Activated CD4-positive, alpha-beta T cell treated with anti-CD3 and anti-CD28 coated beads, Interleukin-2, amount 10 ng/mL, durations not matched to agents 24 days and 14 days (primary cell): ENCODE measurements at regions of chr2 and their contacts with region 1.

Region 1: DNA sequence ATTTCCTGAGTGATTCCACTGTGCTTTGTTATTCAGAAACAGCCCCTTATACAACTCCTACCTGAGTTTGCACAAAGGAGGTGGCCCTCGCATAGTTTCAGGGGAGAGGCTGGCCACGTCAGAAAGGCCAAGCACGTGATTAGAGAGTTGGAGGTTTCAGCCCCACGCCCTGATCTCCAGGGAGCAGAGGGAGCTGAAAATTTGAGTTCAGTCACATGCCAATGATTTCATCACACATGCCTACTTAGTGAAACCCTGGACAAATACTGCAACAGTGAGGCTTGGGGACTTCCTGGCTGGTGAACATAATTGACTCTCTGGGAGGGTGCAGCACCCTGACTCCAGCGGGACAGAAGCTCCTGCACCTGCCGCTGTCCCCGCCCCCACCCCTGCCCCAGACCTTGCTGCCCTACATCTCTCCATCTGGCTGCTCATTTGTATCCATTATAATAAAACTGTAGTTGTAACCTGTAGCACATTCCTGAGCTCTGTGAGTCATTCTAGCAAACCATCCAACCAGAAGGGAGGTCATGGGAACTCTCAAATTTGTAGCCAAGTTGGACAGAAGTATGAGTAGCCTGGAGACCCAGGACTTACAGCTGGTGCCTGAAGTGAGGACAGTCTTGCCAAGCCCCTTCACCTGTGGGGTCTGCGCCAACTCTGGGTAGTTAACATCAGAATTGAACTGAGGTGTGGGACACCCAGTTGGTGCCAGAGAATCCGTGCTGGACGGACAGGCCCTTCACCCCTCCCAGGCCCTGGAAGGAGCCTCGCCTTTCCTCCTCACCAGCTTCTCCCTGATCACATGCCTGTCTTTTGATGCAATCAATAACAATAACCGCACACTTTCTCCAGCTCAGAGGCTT is 224.3 kb downstream of the ANAPC1 start:
- DNase-seq: no peak
- H3K4me3 Mint-ChIP-seq: no peak overlapping the region
- H3K27ac Mint-ChIP-seq: no peak overlapping the region
- H3K4me1 Mint-ChIP-seq: peaks cover 24% of the 10 kb centered on the region
- H3K27me3 Mint-ChIP-seq: peaks cover 32% of the 10 kb centered on the region

Region 2: DNA sequence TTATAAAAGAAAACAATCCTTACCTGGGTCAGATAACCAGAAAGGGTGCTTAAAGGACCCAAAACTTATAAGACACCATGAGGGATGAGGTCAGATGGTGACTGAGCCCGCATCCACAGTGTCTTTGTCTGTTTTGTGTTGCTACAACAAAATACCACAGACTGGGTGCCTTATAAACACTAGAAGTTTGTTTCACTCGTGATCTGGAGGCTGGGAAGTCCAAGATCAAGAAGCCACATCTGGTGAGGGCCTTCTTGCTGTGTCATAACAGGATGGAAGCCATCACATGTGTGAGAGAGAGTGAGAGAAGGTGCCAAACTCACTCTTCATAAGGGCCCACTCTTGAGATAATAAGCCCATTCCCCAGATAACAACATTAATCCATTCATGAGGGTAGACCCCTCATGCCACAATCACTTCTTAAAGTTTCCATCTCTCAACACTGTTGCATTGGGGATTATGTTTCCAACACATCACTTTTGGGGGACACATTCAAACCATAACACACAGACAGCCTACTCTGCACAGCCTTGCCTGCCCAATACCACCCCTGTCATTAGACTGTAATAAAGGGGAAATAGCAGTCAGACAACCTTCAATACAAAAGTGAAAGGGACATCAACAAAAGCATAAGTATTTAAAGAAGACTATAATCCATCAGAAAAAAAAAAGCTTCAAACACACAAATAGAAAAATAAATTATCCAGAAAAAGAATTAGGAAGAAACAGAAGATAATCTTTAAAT is 25.4 kb before region 1 on chr2:
- intact Hi-C with region 1: loop called (anchors 2 kb)
- DNase-seq: peak; percentile 80
- H3K4me3 Mint-ChIP-seq: peak overlapping the region; percentile 62
- H3K27ac Mint-ChIP-seq: peak overlapping the region; percentile 88
- H3K4me1 Mint-ChIP-seq: peaks cover 27% of the 10 kb centered on the region
- H3K27me3 Mint-ChIP-seq: peaks cover 11% of the 10 kb centered on the region

Region 3: DNA sequence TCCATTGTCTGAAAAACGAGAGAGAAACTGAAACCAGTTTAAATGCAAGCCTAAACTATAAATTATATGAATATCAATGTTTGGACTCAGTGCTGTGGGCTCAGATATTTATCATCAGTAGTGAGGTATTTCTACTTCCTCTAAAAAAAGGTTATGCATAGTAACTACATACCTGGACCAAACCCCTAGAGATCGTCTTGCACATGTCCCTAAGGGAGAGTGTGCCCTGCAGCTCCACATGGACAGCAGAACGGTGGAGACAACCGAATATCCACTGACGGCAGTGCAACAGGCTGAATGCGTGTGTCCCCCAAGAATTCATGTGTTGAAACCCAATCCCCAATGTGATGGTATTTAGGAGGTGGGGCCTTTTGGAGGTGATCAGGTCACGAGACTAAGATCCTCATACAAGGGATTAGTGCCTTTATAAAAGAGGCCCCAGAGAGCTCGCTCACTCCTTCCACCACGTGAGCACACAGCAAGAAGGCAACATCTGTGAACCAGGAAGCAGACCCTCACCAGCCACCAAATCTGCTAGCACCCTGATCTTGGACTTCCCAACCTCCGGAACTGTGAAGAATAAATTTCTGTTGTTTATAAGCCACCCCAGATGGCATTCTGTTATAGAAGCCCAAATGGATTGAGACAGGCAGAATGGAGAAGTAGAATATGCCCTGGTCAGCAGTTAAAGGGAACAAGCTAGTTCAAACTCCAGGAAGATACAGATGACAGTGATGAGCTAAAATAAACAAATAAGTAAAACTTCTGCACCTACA is 16.0 kb after region 1 on chr2:
- intact Hi-C with region 1: loop called (anchors 2 kb)
- DNase-seq: no peak
- H3K4me3 Mint-ChIP-seq: no peak overlapping the region
- H3K27ac Mint-ChIP-seq: no peak overlapping the region
- H3K4me1 Mint-ChIP-seq: peaks cover 18% of the 10 kb centered on the region
- H3K27me3 Mint-ChIP-seq: peaks cover 12% of the 10 kb centered on the region

Region 4: GRCh38 chr2:111705711-111706336 is 46.2 kb after region 1 on chr2:
- intact Hi-C with region 1: loop called (anchors 5 kb)
- DNase-seq: peak; percentile 87
- H3K4me3 Mint-ChIP-seq: peak overlapping the region; percentile 61
- H3K27ac Mint-ChIP-seq: peak overlapping the region; percentile 91
- H3K4me1 Mint-ChIP-seq: peaks cover 61% of the 10 kb centered on the region
- H3K27me3 Mint-ChIP-seq: no peaks in the 10 kb centered on the region

Region 5: GRCh38 chr2:111883661-111884591 is 224.3 kb after region 1 on chr2 and contains the start of gene ANAPC1:
- intact Hi-C with region 1: no loop called
- DNase-seq: peak; percentile 96
- H3K4me3 Mint-ChIP-seq: peak within 1 kb of the TSS; percentile 93
- H3K27ac Mint-ChIP-seq: peak within 1 kb of the TSS; percentile 93
- H3K4me1 Mint-ChIP-seq: peaks cover 12% of the 10 kb centered on the region
- H3K27me3 Mint-ChIP-seq: no peaks in the 10 kb centered on the region
- total RNA-seq, gene ANAPC1: 129 and 133 TPM in 2 replicates

Region 6: DNA sequence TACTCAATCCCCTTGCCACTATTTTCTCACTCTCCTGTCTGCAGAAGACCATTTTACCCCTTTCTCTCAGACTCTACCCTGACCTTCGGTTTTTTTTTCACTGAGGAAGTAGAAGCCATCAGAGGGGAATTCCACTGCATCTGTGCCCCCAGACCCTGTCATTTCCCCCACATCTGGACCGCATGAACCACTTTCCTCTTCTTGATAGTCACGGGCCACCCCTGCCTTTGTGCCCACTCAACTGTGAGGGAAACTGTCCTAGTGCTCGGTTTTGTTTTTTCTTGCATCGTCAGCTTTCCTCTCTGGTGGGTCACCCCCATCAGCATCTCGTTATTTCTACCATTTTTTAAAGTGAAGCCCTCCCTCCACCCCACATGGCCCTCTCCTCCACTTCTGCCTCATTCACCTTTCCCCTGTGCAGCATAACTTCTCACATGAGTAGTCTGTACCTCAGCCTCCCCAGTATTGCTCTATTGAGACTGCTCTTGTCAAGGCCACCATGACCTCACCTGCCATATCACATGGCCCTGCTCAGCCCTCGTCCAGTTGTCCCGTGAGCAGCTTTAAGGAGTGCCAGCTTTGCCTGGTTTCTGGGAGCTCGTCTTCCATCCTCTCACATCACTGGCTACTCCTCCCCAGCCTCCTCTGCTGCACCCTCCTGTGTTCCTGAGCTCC is 427.8 kb after region 1 on chr2:
- intact Hi-C with region 1: no loop called
- DNase-seq: no peak
- H3K4me3 Mint-ChIP-seq: no peak overlapping the region
- H3K27ac Mint-ChIP-seq: no peak overlapping the region
- H3K4me1 Mint-ChIP-seq: peaks cover 10% of the 10 kb centered on the region
- H3K27me3 Mint-ChIP-seq: no peaks in the 10 kb centered on the region

Region 7: DNA sequence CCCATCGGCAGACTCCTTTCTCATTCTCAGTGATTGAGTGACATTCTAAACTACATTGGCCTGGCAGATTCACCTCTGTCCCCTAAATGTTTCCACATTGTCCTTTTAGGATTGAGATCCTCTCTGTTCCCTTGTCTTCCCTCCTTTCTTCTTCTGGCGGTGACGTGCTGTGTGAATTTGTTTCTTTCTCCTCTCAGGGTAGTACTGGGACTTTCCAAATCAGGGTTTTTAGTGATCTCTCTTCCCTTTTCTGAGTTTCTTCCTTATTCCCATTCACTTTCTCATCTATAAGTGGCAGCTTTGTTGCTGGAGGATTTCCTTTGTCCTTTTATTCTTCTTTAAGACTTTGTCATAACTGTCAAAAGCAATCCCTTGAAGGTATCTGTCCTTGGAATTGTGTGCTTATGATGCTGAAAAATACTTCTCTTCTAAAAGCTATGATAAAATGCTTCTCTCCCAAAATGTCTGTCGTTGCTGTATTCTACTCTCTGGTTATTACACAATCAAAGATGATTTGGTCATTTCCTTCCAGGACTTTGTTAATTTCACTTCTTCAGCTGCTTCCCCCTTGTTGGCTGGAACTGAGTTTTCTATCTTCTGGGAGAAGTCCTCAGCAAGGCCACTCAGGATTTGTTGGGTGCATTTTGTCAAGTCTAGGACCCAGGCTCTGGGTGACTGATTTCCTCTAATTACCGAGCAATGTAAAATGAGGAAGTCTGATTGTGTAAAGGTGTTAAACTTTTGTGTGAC is 1181.8 kb after region 1 on chr2:
- intact Hi-C with region 1: no loop called
- DNase-seq: no peak
- H3K4me3 Mint-ChIP-seq: no peak overlapping the region
- H3K27ac Mint-ChIP-seq: no peak overlapping the region
- H3K4me1 Mint-ChIP-seq: peaks cover 4% of the 10 kb centered on the region
- H3K27me3 Mint-ChIP-seq: peaks cover 50% of the 10 kb centered on the region